Activated CD8-positive, alpha-beta T cell treated with anti-CD3 and anti-CD28 coated beads, Interleukin-2, amount 10 ng/mL, durations not matched to agents 7 days and 5 days (primary cell): ENCODE measurements at regions of chr9 and their contacts with region 1.

Region 1: DNA sequence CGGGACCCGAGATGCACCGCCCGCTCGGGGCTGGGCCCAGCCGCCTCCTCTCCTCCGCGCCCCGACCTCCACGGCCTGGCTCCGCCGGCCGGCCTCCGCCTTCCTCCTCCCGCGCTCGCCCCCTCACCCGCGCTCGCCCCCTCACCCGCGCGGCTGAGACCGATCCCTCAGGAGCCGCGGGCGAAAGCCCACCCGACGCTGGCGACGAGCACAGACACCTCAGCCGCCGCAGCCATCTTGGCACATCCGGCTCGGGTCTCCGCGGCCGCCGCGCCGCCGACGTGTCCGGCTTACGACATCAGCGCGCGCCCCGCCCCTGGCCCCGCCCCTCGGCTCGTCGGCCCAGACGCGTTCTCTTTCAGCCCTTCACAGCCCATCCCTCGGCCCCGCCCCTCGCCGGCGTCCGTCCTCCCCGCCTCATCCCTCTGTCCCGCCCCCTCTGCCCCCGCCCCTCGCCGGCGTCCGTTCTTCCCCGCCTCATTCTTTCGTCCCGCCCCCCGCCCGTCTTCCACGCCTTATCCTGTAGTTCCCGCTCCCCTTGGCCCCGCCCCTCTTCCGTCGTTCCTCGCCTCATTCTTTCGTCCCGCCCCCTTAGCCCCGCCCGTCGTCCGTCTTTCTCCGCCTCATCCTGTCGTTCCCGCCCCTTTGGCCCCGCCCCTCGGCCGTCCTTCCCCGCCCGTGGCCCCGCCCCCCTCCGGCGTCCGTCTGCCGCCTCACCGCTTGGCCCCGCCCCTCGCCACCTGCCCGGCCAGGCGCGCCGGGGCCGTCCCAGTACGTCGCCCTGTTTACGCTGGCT is at the start of gene SEC16A:
- DNase-seq: peak; percentile 99
- ATAC-seq: peak; percentile 70
- H3K4me3 Mint-ChIP-seq: peak within 1 kb of the TSS; percentile 92
- H3K27ac Mint-ChIP-seq: peak within 1 kb of the TSS; percentile 100
- H3K4me1 Mint-ChIP-seq: peaks cover 30% of the 10 kb centered on the region
- H3K27me3 Mint-ChIP-seq: no peaks in the 10 kb centered on the region
- total RNA-seq, gene SEC16A: 86.8 to 89.2 TPM

Region 2: GRCh38 chr9:136051517-136052432 is 431.2 kb before region 1 on chr9:
- CTCF ChIA-PET with region 1: no interaction called
- POLR2A ChIA-PET with region 1: no interaction called
- DNase-seq: no peak
- ATAC-seq: no peak
- H3K4me3 Mint-ChIP-seq: no peak overlapping the region
- H3K27ac Mint-ChIP-seq: no peak overlapping the region
- H3K4me1 Mint-ChIP-seq: peaks cover 7% of the 10 kb centered on the region
- H3K27me3 Mint-ChIP-seq: peaks cover 14% of the 10 kb centered on the region

Region 3: DNA sequence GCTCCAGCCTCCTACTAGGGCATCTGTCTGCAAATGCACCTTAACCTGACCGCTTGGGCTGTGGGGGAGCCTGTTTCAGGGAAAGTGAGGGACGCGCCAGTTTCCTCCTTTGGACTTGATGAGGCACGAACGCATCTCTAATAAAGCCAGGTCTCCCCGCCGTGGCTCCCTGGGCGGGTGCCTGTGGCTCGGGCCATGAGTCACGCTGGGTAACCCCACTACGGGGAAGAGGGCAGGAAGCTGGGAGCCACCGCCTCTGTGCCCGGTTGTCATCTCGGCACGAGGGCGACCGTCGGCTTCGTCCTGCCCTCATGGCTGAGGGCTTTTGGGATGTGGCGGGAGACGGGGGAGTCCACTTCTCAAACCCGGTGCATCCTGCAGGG is 50.8 kb after region 1 on chr9:
- CTCF ChIA-PET with region 1: interaction called, 30 read pairs
- POLR2A ChIA-PET with region 1: no interaction called
- DNase-seq: peak; percentile 84
- ATAC-seq: peak; percentile 70
- H3K4me3 Mint-ChIP-seq: peak overlapping the region; percentile 69
- H3K27ac Mint-ChIP-seq: peak overlapping the region; percentile 92
- H3K4me1 Mint-ChIP-seq: peaks cover 79% of the 10 kb centered on the region
- H3K27me3 Mint-ChIP-seq: no peaks in the 10 kb centered on the region

Region 4: GRCh38 chr9:136539427-136540421 is 56.7 kb after region 1 on chr9:
- CTCF ChIA-PET with region 1: interaction called, 30 read pairs
- POLR2A ChIA-PET with region 1: no interaction called
- DNase-seq: peak; percentile 97
- ATAC-seq: peak; percentile 86
- H3K4me3 Mint-ChIP-seq: peak overlapping the region; percentile 79
- H3K27ac Mint-ChIP-seq: peak overlapping the region; percentile 99
- H3K4me1 Mint-ChIP-seq: peaks cover 80% of the 10 kb centered on the region
- H3K27me3 Mint-ChIP-seq: no peaks in the 10 kb centered on the region

Region 5: DNA sequence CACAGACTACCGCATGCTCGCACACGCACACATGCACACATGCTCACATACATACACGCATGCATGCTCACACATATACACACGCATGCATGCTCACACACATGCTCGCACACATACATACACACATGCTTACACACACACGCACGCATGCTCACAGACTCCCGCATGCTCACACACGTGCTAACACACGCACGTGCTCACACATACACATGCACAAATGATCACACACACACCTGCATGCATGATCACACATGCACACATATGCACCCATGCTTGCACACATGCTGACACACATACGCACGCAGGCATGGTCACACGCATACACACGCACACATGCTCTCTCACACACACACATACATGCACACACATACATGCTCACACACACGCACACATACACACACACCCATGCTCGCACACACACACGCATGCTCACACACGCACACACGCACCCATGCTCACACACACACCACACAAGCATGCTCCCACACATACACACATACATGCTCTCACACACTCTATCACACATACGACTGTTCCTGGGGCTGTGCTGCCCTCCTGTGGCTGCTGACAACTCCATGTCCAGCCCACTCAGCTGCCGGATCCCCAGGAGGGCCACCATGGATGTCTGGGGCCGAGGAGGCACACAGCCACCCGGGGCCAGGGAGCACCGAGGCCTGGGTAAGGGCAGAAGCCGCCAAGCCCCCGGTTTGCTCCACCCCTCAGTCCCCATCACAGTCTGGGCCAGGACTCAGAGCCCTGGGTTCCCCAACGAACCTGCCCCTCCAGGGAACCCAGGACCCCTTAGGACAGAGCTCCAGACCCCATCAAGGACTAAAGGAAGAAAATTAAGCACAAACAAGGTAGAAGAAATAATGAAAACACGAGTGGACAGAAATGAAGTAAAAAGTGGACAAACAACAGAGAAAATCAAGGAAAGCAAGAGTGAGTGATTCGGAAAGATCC is 148.3 kb after region 1 on chr9:
- CTCF ChIA-PET with region 1: interaction called, 55 read pairs
- POLR2A ChIA-PET with region 1: interaction called, 8 read pairs
- DNase-seq: peak; percentile 83
- ATAC-seq: peak; percentile 90
- H3K4me3 Mint-ChIP-seq: no peak overlapping the region
- H3K27ac Mint-ChIP-seq: no peak overlapping the region
- H3K4me1 Mint-ChIP-seq: no peaks in the 10 kb centered on the region
- H3K27me3 Mint-ChIP-seq: peaks cover 3% of the 10 kb centered on the region

Region 6: GRCh38 chr9:136644598-136645351 is 161.8 kb after region 1 on chr9:
- CTCF ChIA-PET with region 1: interaction called, 11 read pairs
- POLR2A ChIA-PET with region 1: interaction called, 3 read pairs
- DNase-seq: peak; percentile 84
- ATAC-seq: no peak
- H3K4me3 Mint-ChIP-seq: no peak overlapping the region
- H3K27ac Mint-ChIP-seq: no peak overlapping the region
- H3K4me1 Mint-ChIP-seq: peaks cover 4% of the 10 kb centered on the region
- H3K27me3 Mint-ChIP-seq: peaks cover 28% of the 10 kb centered on the region